Activated CD8-positive, alpha-beta T cell treated with anti-CD3 and anti-CD28 coated beads for 36 hours (primary cell): ENCODE measurements at regions of chr9 and their contacts with region 1.

Region 1: GRCh38 chr9:112905084-112905483 is 14.4 kb upstream of the SLC46A2 start:
- DNase-seq: no peak
- ATAC-seq: no peak
- H3K4me3 Mint-ChIP-seq: no peak overlapping the region
- H3K27ac Mint-ChIP-seq: no peak overlapping the region
- H3K4me1 Mint-ChIP-seq: peaks cover 7% of the 10 kb centered on the region
- H3K27me3 Mint-ChIP-seq: peaks cover 17% of the 10 kb centered on the region
- CTCF ChIP-seq: no peak

Region 2: DNA sequence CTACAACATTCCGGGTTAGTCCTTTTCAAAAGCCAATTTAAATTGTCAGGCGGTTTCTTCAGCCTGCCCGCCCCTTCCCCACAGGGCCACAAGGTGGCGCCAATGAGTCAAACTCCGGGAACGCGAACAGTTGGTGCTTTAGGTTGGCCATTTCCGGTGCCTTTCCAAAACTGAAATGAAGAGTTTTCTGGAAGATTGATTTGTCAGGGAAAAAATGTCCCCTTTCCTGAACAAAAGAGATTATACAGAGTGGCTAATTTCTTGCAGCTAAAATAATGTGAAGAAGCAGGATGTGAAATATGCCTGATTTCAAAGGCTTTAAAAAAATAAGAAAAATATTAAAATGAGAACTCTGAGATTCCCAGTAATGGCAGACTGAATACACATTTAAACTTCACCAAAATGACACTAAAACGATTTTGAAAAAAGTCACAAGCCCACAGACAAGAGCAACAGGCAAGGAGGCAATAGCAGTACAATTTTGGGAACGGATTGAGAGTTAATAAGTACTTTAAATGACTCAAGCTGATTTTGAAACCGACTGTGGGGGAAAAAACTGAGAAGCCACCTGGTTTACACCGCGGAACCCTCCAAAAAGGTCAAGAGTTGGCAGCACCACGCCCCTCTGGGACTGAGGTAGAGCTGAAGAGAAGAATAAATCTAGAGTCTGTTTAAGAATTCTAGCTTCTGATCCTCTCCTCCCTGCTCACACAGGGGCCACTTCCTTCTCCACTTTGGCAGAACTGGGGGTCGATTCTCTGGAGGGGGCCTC is 60.1 kb before region 1 on chr9:
- CTCF ChIA-PET with region 1: interaction called, 89 read pairs
- POLR2A ChIA-PET with region 1: interaction called, 3 read pairs
- intact Hi-C with region 1: loop called (anchors 5 kb)
- DNase-seq: peak; percentile 85
- ATAC-seq: peak; percentile 77
- H3K4me3 Mint-ChIP-seq: no peak overlapping the region
- H3K27ac Mint-ChIP-seq: no peak overlapping the region
- H3K4me1 Mint-ChIP-seq: peaks cover 10% of the 10 kb centered on the region
- H3K27me3 Mint-ChIP-seq: no peaks in the 10 kb centered on the region
- CTCF ChIP-seq: peak; percentile 99

Region 3: DNA sequence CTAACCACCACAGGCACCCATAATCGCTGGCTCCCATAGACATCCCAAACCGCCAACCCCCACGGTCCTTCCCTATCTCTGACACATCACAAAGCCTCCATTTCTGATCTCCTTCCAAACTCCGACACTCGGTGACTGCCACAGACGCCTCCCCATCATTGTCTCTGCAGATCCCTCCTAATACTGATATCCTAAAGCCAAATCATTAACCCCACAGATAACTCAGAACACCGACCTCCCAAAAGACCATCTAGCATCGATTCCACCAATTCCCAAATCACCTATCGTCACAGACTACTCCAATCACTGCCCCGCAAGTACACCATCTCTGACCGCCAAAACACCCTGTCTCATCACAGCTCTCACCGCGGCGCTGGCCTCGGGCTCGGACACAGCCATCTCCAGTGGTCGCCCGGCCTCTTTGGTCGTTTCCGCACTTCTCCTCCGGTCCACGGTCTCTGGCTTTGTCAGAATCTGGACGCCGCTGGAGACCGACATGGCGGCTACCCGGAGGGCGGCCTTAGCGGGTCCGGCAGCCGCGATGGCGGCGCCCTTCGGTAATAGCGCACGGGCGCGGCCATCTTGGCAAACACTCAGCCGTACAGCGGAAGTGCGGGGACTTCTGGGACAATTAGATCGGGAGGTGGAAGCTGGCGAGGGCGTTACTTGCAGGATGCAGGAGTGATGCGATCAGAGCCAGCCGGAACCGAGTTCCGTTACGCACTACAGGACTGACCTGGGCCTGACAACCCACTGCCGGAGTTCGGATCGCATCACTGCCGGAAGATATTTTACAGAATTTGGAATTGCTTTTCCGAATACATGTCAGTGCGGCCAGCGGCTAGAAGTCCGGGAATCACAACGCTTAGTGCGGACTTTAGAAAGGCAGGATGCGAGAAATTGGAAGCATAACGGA is 151.4 kb after region 1 on chr9 and contains the start of gene ZFP37:
- CTCF ChIA-PET with region 1: no interaction called
- POLR2A ChIA-PET with region 1: no interaction called
- intact Hi-C with region 1: no loop called
- DNase-seq: peak; percentile 77
- ATAC-seq: peak; percentile 96
- H3K4me3 Mint-ChIP-seq: no peak within 1 kb of the TSS
- H3K27ac Mint-ChIP-seq: no peak within 1 kb of the TSS
- H3K4me1 Mint-ChIP-seq: no peaks in the 10 kb centered on the region
- H3K27me3 Mint-ChIP-seq: peaks cover 14% of the 10 kb centered on the region
- CTCF ChIP-seq: no peak
- total RNA-seq, gene ZFP37: 1.3 to 1.4 TPM